ENCODE measurements at regions of chr1 and their contacts with region 1.

Region 1: GRCh38 chr1:187588917-187589316 is 760.2 kb downstream of the PLA2G4A start:
- DNase-seq: no peak
- H3K4me3 ChIP-seq: no peak overlapping the region
- H3K27ac ChIP-seq: no peak overlapping the region
- H3K4me1 ChIP-seq: no peaks in the 10 kb centered on the region
- H3K27me3 ChIP-seq: no peaks in the 10 kb centered on the region
- CTCF ChIP-seq: no peak
- POLR2A ChIP-seq: no peak

Region 2: DNA sequence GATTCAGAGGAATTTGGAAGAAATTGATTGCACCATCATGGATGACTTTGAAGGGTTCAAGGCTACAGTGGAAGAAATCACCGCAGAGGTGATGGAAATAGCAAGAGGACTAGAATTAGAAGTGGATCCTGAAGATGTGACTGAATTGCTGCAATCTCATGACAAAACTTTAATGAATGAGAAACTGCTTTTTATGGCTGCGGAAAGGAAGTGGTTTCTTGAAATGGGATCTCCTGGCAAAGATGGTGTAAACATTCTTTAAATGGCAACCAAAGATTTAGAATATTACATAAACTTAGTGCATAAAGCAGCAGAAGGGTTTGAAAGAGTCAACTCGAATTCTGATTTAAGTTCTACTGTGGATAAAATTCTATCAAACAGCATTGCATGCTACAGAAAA is 61.6 kb before region 1 on chr1:
- CTCF ChIA-PET with region 1: no interaction called
- POLR2A ChIA-PET with region 1: no interaction called
- dilution Hi-C with region 1: no loop called
- intact Hi-C with region 1: loop called (anchors 5 kb)
- DNase-seq: no peak
- H3K4me3 ChIP-seq: no peak overlapping the region
- H3K27ac ChIP-seq: no peak overlapping the region
- H3K4me1 ChIP-seq: no peaks in the 10 kb centered on the region
- H3K27me3 ChIP-seq: no peaks in the 10 kb centered on the region
- CTCF ChIP-seq: no peak
- POLR2A ChIP-seq: no peak

Region 3: GRCh38 chr1:188218289-188218688 is 629.4 kb after region 1 on chr1:
- CTCF ChIA-PET with region 1: no interaction called
- POLR2A ChIA-PET with region 1: no interaction called
- dilution Hi-C with region 1: no loop called
- intact Hi-C with region 1: no loop called
- DNase-seq: no peak
- H3K4me3 ChIP-seq: no peak overlapping the region
- H3K27ac ChIP-seq: no peak overlapping the region
- H3K4me1 ChIP-seq: no peaks in the 10 kb centered on the region
- H3K27me3 ChIP-seq: no peaks in the 10 kb centered on the region
- CTCF ChIP-seq: no peak
- POLR2A ChIP-seq: no peak

Measured in endothelial cell of umbilical vein (primary cell).